ENCODE measurements at regions of chr3 and their contacts with region 1.

Region 1: GRCh38 chr3:87260270-87260669 is 16.1 kb downstream of the POU1F1 start:
- DNase-seq: peak; percentile 10
- H3K4me3 ChIP-seq: no peak overlapping the region
- H3K27ac ChIP-seq: no peak overlapping the region
- H3K27me3 ChIP-seq: no peaks in the 10 kb centered on the region
- CTCF ChIP-seq: peak; percentile 79

Region 2: DNA sequence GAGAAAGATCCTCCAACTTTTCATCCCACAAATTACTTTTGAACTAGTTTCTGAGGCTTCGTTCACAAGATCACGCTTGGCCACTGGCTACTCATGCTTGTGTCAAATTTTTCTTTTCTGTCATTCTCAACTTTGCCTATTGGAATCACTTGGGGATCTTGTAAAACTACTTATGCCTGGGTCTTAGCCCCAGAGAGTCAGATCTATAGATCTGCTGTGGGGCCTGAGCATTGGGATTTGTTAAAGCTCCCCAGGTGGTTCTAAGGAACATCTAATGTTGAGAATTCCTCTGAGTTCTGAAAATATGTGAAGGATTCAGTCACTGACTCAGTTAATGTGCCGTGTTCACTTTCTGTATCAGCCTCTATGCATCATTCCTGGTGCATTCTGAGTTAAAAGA is 197.6 kb before region 1 on chr3:
- CTCF ChIA-PET with region 1: no interaction called
- POLR2A ChIA-PET with region 1: no interaction called
- DNase-seq: no peak
- H3K4me3 ChIP-seq: no peak overlapping the region
- H3K27ac ChIP-seq: no peak overlapping the region
- H3K27me3 ChIP-seq: no peaks in the 10 kb centered on the region
- CTCF ChIP-seq: no peak

Region 3: DNA sequence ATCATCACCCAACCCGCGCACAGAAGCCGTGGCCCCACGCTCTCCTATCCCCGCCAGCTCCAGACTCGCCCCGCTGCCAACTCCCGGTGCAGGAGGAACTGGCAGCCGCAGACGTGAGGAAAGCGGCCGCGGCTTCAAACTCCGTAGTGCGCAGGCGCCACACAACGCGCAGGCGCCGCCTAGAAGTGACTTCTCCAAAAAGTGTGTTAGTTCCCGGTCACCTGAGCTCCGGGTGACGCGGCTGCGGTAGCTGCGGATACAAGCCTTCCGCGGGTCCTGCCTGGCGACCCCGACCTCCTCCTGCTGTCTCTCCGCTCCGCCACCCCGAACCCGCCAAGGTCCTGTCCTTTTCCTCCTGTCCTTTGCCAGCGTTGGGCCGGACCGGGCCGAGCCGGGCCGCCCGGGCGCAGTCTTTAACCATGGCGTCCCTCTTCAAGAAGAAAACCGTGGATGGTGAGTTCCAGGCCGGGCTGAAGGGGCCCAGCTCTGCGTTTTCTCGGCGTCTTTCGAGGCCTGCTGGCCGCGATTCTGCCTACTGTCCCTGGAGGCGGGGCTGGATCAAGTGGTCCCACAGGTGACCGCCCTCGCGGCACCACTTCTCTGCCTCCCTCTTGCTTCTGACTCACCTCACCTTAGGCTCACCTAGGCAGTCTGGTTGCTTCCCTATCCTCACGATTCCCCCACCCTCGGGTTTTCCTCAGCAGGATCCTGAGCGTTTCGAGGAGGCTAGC is 33.0 kb before region 1 on chr3 and contains the start of gene CHMP2B:
- CTCF ChIA-PET with region 1: interaction called, 13 read pairs
- POLR2A ChIA-PET with region 1: no interaction called
- DNase-seq: peak; percentile 79
- H3K4me3 ChIP-seq: peak within 1 kb of the TSS; percentile 76
- H3K27ac ChIP-seq: peak within 1 kb of the TSS; percentile 84
- H3K27me3 ChIP-seq: peaks cover 2% of the 10 kb centered on the region
- CTCF ChIP-seq: no peak
- polyA plus RNA-seq, gene CHMP2B: 19.3 and 28.4 TPM in 2 replicates

Region 4: GRCh38 chr3:87250009-87250408 is 10.3 kb before region 1 on chr3:
- CTCF ChIA-PET with region 1: interaction called, 22 read pairs
- POLR2A ChIA-PET with region 1: no interaction called
- DNase-seq: no peak
- H3K4me3 ChIP-seq: no peak overlapping the region
- H3K27ac ChIP-seq: no peak overlapping the region
- H3K27me3 ChIP-seq: no peaks in the 10 kb centered on the region
- CTCF ChIP-seq: no peak

Region 5: GRCh38 chr3:87298111-87298718 is 37.9 kb after region 1 on chr3:
- CTCF ChIA-PET with region 1: interaction called, 13 read pairs
- POLR2A ChIA-PET with region 1: no interaction called
- DNase-seq: peak; percentile 7
- H3K4me3 ChIP-seq: no peak overlapping the region
- H3K27ac ChIP-seq: no peak overlapping the region
- H3K27me3 ChIP-seq: no peaks in the 10 kb centered on the region
- CTCF ChIP-seq: peak; percentile 67

Region 6: GRCh38 chr3:87595798-87596197 is 335.5 kb after region 1 on chr3:
- CTCF ChIA-PET with region 1: no interaction called
- POLR2A ChIA-PET with region 1: no interaction called
- DNase-seq: no peak
- H3K4me3 ChIP-seq: no peak overlapping the region
- H3K27ac ChIP-seq: no peak overlapping the region
- H3K27me3 ChIP-seq: no peaks in the 10 kb centered on the region
- CTCF ChIP-seq: no peak

Measured in AG04450 (cell line).